WTC11 (cell line): ENCODE measurements at regions of chr2 and their contacts with region 1.

Region 1: GRCh38 chr2:11784747-11785610 is 38.5 kb downstream of the LPIN1 start:
- DNase-seq: peak; percentile 80
- ATAC-seq: peak; percentile 91
- H3K4me3 Mint-ChIP-seq: peak overlapping the region; percentile 60
- H3K27ac Mint-ChIP-seq: no peak overlapping the region
- H3K4me1 Mint-ChIP-seq: peaks cover 4% of the 10 kb centered on the region; the same call in 1 of the 2 replicates
- H3K27me3 Mint-ChIP-seq: no peaks in the 10 kb centered on the region; the same call in 1 of the 2 replicates
- CTCF ChIP-seq: peak; percentile 89

Region 2: DNA sequence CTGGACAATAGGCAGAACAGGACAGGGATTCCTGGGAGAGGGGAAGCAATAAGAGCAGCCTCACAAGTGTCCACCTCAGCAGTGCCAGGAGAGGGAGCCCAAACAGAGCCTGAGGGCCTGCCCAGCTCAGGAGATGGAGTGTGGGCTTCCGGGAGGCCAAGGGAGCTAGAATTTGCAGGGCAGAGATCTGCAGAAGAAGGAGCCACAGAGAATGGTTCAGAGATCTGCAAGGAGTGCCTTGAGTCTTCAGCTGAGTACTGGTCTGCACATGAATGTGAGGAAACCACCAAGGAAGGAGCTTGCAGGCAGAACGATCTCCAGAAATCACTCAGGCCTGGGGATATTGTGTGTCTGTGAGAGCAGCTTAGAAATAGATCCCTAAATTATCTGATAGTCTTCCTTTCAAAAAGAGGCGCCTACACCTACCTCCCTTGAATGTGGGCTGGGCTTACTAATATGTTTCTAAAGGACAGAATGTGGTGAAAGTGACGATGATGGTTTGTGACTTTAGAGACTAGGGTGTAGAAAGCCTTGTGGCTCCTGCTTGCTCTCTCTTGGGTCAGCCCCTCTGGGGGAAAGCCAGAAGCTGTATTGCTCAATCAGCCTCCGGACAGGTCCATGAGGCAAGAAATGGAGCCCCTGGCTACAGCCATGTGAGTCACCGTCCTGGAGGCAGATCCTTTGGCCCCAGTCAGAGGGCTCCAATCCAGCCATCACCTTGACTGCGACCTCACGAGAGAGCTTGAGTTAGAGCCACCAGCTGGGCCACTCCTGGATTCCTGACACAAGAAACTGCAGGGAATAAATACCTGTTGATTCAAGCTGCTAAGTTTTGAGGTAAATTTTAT is 46.2 kb before region 1 on chr2:
- CTCF ChIA-PET with region 1: interaction called, 64 read pairs
- POLR2A ChIA-PET with region 1: no interaction called
- DNase-seq: peak; percentile 57
- ATAC-seq: peak; percentile 95
- H3K4me3 Mint-ChIP-seq: no peak overlapping the region
- H3K27ac Mint-ChIP-seq: 0 out of 2 replicates have a peak overlapping the region, but pooled peaks have one; percentile 67
- H3K4me1 Mint-ChIP-seq: peaks cover 27% of the 10 kb centered on the region
- H3K27me3 Mint-ChIP-seq: peaks cover 3% of the 10 kb centered on the region
- CTCF ChIP-seq: no peak

Region 3: DNA sequence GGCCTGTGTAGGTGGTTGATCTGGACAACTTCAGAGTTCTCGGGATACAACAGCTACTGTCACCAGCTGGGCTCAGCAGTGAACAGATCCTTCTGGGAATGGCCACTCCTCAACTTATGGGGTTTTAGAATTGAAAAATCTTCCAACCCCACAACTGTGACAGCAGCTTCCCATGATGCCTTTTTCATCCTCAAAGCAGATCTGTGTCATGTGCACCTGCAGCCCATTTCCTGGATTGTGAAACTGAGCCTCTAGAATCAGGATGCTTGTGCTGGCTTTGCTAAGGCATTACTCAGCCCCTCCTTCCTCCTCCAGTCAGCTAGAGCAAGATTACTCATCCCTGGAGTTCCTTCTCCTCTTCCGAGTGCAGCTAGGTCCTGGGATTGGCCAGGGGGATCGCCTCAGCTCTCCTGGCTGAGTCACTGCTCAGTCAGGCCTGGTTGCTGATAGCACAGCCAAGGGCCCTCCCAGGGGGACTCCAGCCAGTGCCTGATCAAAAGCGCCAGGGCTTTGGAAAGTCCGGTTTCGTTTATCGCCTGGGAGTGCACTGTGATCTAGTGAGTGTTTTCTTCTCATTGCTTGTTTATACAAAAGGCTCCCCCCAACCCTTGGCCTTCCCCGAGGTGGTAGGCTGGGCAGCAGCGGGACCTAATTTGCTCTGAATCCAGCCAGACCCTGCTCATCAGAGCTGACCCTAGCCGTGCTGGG is 41.0 kb before region 1 on chr2:
- CTCF ChIA-PET with region 1: interaction called, 64 read pairs
- POLR2A ChIA-PET with region 1: interaction called, 3 read pairs
- DNase-seq: peak; percentile 77
- ATAC-seq: peak; percentile 62
- H3K4me3 Mint-ChIP-seq: no peak overlapping the region
- H3K27ac Mint-ChIP-seq: peak overlapping the region; percentile 90
- H3K4me1 Mint-ChIP-seq: peaks cover 55% of the 10 kb centered on the region
- H3K27me3 Mint-ChIP-seq: peaks cover 13% of the 10 kb centered on the region
- CTCF ChIP-seq: no peak